Calu3 (cell line): ENCODE measurements at regions of chr7 and their contacts with region 1.

Region 1: DNA sequence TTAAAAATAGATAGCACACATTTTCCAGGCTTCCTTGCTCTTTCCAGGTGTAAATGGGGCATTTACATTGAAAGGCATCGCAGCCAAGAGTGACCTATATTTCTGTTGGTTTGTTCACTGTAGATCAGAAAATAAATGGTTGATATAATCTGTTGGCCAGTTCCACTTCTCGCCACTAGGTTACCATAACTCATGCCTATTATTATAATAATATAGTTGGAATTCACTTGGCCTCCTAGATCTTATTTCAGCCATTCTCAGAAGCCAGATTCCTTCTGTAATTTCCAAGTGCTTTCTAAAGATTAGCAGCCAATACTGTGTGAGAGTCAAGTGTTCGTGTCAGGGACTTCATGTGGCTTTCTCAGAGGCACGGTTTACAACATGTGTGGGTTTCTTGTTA is 179.5 kb downstream of the DNAH11 start:
- DNase-seq: no peak
- H3K4me3 Mint-ChIP-seq: no peak overlapping the region
- H3K27ac Mint-ChIP-seq: no peak overlapping the region
- H3K4me1 Mint-ChIP-seq: no peaks in the 10 kb centered on the region
- H3K27me3 Mint-ChIP-seq: peaks cover 36% of the 10 kb centered on the region
- CTCF ChIP-seq: peak; percentile 63

Region 2: GRCh38 chr7:21636694-21637093 is 85.7 kb before region 1 on chr7:
- CTCF ChIA-PET with region 1: no interaction called
- intact Hi-C with region 1: no loop called
- DNase-seq: no peak
- H3K4me3 Mint-ChIP-seq: no peak overlapping the region
- H3K27ac Mint-ChIP-seq: no peak overlapping the region
- H3K4me1 Mint-ChIP-seq: no peaks in the 10 kb centered on the region
- H3K27me3 Mint-ChIP-seq: no peaks in the 10 kb centered on the region
- CTCF ChIP-seq: no peak

Region 3: DNA sequence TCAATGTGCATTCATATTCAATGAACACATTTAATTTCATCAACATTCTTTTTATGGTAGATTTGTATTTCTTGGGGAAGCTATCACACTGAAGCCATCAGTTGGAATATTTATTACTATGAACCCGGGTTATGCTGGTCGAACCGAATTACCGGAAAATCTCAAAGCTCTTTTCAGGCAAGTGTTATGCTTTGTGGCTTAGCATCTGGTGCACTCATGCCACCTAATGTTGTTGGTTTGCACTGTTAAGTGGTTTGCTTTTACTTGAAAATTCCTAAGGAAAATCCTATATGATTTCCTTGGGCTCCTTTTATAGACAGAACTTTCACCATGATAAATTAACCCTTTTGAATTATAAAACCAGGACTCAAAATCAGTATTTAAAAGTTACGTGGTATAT is 31.7 kb before region 1 on chr7:
- CTCF ChIA-PET with region 1: no interaction called
- intact Hi-C with region 1: loop called (anchors 1 kb)
- DNase-seq: no peak
- H3K4me3 Mint-ChIP-seq: no peak overlapping the region
- H3K27ac Mint-ChIP-seq: no peak overlapping the region
- H3K4me1 Mint-ChIP-seq: no peaks in the 10 kb centered on the region
- H3K27me3 Mint-ChIP-seq: peaks cover 14% of the 10 kb centered on the region
- CTCF ChIP-seq: no peak